ENCODE measurements at regions of chr12 and their contacts with region 1.

Region 1: DNA sequence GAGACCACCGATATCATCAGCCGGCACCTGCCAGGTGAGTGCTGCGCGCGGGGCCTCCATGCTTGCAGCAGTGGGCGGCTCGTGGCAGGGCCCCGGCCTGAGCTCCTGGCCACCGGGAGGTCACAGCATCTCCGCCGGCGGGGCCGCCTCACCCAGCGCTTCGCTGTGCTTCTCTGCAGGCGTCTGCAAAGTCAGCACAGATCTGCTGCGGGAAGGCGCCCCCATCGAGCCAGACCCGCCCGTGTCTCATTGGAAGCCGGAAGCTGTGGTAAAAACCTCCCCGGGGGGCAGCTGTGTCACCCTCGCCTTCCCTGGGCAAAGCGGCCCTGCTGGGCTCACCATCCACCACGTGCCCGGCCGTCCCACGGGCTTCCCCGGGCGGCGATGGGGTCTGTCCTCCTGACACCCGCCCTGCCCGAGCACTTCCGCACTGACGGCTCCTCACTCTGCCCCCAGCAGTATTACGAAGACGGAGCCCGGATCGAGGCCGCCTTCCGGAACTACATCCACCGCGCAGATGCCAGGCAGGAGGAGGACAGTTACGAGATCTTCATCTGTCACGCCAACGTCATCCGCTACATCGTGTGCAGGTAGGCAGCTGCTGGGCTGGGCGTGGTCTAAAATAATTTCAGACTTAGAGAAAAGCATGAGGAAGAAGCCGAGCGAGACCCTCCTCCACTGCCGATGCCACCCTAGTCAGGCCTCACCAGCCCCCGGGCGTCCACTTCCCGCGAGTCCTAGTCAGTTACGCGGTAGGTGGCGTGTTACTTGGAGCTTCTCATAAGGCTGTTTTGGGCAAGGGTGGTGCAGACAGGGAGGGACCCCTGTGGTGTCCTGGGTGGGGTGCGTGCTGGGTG is 7.1 kb downstream of the PGAM5 start:
- DNase-seq: no peak
- H3K4me3 ChIP-seq: no peak overlapping the region
- H3K4me1 ChIP-seq: no peaks in the 10 kb centered on the region
- H3K27me3 ChIP-seq: no peaks in the 10 kb centered on the region

Region 2: DNA sequence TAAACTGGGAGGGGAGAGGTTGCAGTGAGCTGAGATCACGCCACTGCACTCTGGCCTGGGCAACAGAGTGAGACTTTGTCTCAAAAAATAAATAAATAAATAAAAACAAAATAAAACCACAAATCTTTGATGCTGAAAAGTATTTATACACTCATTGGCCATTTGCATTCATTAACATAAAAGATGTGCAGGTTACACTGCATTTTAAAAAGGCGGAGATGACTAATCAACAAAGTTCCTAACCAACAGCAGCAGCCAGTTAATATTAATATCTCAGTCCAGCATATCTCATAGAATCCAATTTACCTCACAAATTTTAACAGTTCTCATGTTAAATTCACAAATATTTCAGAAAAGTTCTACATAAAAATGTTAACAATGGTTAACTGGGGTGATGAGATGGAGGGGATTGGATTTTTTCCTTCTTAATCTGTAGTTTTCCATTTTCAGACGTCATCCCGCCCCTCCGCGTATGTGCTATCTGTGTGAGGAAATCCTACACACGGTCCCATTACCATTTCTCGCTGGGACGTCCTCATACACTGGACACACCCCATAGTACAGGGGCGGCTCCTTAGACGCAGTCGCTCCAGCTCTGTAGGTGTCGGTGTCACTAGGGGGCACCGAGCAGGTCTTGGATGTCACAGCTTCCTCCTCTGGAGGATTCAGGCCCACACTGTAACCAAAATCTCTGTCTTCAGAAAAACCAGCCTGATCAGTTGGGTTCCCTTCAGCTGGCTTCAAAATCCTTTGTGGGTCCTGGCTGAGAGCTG is 36.6 kb after region 1 on chr12:
- in situ Hi-C with region 1: loop called (anchors 5 kb)
- DNase-seq: peak in 1 of 2 experiments; percentile 31
- H3K4me3 ChIP-seq: no peak overlapping the region
- H3K4me1 ChIP-seq: no peaks in the 10 kb centered on the region
- H3K27me3 ChIP-seq: no peaks in the 10 kb centered on the region

Measured in HAP-1 (cell line).